ENCODE measurements at regions of chr22 and their contacts with region 1.

Region 1: DNA sequence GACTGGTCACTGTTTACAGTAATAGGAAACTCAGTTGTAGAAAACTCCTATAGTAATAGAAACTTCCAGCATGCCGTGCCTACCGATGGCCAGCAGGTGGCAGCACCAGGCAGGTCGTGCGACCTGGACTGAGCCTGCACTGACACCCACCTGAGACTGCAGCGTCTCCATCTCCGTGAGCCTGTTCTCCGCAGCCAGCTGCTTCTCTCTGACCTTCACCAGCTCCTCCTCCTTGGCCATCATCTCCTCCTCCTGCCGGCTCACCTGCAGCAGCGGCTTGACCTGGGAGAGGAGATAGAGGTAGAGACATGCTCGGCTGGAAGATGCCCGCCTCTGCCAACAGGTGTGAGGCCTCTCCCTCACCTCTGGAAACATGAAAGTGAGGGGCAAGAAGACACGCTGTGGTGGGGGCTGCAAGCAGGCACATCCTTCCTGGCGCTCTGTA is 48.5 kb downstream of the APOL1 start:
- DNase-seq: peak; percentile 65
- H3K4me3 Mint-ChIP-seq: no peak overlapping the region
- H3K27ac Mint-ChIP-seq: no peak overlapping the region
- H3K4me1 Mint-ChIP-seq: peaks cover 6% of the 10 kb centered on the region
- H3K27me3 Mint-ChIP-seq: no peaks in the 10 kb centered on the region

Region 2: GRCh38 chr22:36052505-36053270 is 248.7 kb before region 1 on chr22:
- intact Hi-C with region 1: no loop called
- DNase-seq: no peak
- H3K4me3 Mint-ChIP-seq: no peak overlapping the region
- H3K27ac Mint-ChIP-seq: no peak overlapping the region
- H3K4me1 Mint-ChIP-seq: peaks cover 9% of the 10 kb centered on the region
- H3K27me3 Mint-ChIP-seq: peaks cover 18% of the 10 kb centered on the region

Region 3: DNA sequence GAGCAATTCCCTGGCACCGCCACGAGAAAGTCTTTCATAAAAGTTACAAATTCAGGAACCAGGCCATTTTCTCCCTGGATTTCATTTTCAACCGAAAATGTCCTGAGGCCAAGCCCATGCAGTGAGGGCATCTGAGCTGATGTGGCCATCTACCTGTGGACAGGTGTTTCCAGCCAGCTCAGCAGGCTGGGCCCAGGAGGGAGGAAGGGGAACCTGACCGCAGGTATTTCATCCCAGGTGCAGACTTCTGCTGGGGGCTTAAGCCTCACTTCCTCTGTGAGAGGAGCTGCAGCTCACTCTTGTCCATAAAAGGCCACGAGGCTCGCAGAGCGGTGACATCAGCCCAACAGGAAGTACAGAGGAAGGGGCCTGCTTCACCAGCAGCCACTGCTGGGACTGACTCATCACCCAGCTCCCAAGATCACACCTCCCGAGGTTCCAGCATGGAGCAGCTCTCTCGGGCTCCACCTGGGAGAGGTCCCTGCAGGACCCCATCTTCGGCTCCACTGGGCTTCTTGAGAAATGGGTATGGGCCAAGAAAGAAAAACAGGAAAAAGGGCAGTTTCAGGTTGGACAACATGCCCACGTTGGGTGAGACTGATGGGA is 30.0 kb after region 1 on chr22:
- intact Hi-C with region 1: loop called (anchors 1 kb)
- DNase-seq: peak; percentile 77
- H3K4me3 Mint-ChIP-seq: peak overlapping the region; percentile 86
- H3K27ac Mint-ChIP-seq: peak overlapping the region; percentile 98
- H3K4me1 Mint-ChIP-seq: peaks cover 99% of the 10 kb centered on the region
- H3K27me3 Mint-ChIP-seq: no peaks in the 10 kb centered on the region

Region 4: DNA sequence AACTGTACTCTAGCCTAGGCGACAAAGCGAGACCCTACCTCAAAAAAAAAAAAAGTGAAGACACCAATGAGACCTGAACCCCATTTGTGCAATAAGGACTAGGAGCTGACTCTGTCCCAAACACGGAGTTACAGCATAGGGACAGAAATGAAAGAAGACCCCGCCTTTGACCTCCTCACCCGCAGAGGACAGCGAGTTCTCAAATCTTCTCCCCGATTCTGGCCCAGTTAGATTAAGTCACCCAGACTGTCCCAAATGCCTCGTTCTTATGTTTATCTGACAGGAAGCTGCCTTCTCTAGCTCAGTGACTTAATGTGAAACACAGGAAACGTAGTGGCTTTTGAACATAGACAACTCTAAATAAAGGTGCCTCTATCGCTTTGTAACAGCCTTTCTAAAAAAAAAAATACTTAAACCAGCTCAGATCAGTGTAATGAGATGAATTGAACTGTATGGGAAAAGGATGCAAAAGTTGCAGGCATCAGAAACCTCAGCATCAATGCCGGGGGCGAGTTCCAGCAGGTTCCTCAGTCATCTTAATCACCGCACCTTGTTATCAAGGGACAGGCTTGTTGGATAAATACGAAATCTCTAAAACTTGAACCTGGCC is 75.7 kb after region 1 on chr22:
- intact Hi-C with region 1: loop called (anchors 2 kb)
- DNase-seq: peak; percentile 52
- H3K4me3 Mint-ChIP-seq: peak overlapping the region; percentile 87
- H3K27ac Mint-ChIP-seq: peak overlapping the region; percentile 99
- H3K4me1 Mint-ChIP-seq: peaks cover 91% of the 10 kb centered on the region
- H3K27me3 Mint-ChIP-seq: no peaks in the 10 kb centered on the region

Region 5: GRCh38 chr22:36470162-36470993 is 169.0 kb after region 1 on chr22:
- intact Hi-C with region 1: loop called (anchors 1 kb)
- DNase-seq: peak; percentile 79
- H3K4me3 Mint-ChIP-seq: no peak overlapping the region
- H3K27ac Mint-ChIP-seq: no peak overlapping the region
- H3K4me1 Mint-ChIP-seq: peaks cover 27% of the 10 kb centered on the region
- H3K27me3 Mint-ChIP-seq: no peaks in the 10 kb centered on the region